Aorta (tissue), 5 donors: ENCODE measurements at regions of chr15 and their contacts with region 1.

Region 1: GRCh38 chr15:68053701-68054627 is at the start of gene PIAS1:
- DNase-seq: peak; percentile 96 to 98
- ATAC-seq: peak; percentile 97
- H3K4me3 ChIP-seq: peak within 1 kb of the TSS; percentile 67 to 98
- H3K27ac ChIP-seq: no peak within 1 kb of the TSS
- H3K4me1 ChIP-seq: peaks cover 0 to 3% of the 10 kb centered on the region in 2 donors
- H3K27me3 ChIP-seq: no peaks in the 10 kb centered on the region
- total RNA-seq, gene PIAS1: 43.6 to 62.9 TPM

Region 2: GRCh38 chr15:67839929-67840748 is 213.8 kb before region 1 on chr15 and contains the start of gene RNU6-1:
- intact Hi-C with region 1: loop called in 1 of 2 experiments (anchors 1 kb)
- DNase-seq: peak; percentile 96 to 98
- ATAC-seq: peak; percentile 96
- H3K4me3 ChIP-seq: peak within 1 kb of the TSS; percentile 53 to 96
- H3K27ac ChIP-seq: peak within 1 kb of the TSS; percentile 17 to 98
- H3K4me1 ChIP-seq: no peaks in the 10 kb centered on the region
- H3K27me3 ChIP-seq: no peaks in the 10 kb centered on the region
- total RNA-seq, gene RNU6-1: not detected

Region 3: DNA sequence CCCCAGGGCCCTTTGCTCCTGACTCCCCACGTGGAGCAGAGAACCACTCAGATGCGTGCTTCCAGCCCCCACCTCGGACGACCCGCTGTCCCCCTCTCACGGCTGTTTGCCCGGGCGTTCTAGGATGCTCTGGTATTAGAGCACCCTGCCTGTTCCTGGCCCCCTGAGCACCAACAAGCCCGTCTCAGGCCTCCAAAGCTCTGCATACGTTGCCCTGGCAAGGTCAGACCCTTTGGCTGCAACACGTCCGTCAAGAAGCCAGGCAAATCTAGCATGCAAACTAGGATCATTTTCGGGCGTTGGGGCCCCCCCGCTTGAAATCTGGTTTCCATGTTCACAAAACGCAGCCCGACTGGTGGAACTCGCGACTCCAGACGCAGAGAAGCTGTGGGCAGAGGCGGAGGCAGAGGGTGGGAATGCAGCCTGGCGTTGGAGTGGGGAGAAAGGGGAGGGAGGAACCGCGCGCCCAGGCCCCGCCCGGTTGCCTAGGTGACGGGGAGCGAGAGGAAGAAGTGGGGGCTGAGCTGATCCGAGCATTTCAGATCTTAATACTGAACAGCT is 86.0 kb before region 1 on chr15:
- intact Hi-C with region 1: loop called in 1 of 2 experiments (anchors 5 kb)
- DNase-seq: peak; percentile 89 to 93
- ATAC-seq: peak; percentile 94
- H3K4me3 ChIP-seq: peak overlapping the region in 1 of 2 donors; percentile 23
- H3K27ac ChIP-seq: no peak overlapping the region
- H3K4me1 ChIP-seq: no peaks in the 10 kb centered on the region
- H3K27me3 ChIP-seq: no peaks in the 10 kb centered on the region

Region 4: GRCh38 chr15:68154923-68155559 is 101.1 kb after region 1 on chr15:
- intact Hi-C with region 1: loop called in 1 of 2 experiments (anchors 10 kb)
- DNase-seq: no peak
- ATAC-seq: peak; percentile 66
- H3K4me3 ChIP-seq: no peak overlapping the region
- H3K27ac ChIP-seq: no peak overlapping the region
- H3K4me1 ChIP-seq: peaks cover 3 to 4% of the 10 kb centered on the region in 2 donors
- H3K27me3 ChIP-seq: no peaks in the 10 kb centered on the region

Region 5: DNA sequence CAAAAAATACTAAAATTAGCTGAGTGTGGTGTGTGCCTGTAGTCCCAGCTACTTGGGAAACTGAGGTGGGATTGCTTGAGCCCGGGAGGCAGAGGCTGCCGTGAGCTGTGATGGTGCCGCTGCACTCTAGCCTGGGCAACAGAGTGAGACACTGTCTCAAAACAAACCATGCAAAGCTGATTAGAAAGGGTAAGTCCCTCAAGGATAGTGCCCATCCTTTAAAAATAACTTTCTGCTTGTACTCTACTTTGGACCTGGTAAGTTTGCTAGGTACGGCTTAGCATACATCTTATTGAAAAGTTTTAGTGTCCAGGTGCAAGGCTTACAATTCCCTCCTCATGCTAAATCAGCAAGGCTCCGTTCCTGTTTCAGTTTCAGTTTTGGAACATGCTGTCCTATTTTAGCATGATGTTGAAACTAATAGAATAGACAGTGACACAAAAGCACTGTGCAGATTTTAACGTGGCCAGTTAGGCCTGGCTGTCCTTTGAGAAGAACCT is 245.0 kb after region 1 on chr15:
- intact Hi-C with region 1: no loop called
- DNase-seq: no peak
- ATAC-seq: peak; percentile 54
- H3K4me3 ChIP-seq: no peak overlapping the region
- H3K27ac ChIP-seq: peak overlapping the region in 1 of 2 donors; percentile 29
- H3K4me1 ChIP-seq: no peaks in the 10 kb centered on the region
- H3K27me3 ChIP-seq: no peaks in the 10 kb centered on the region